Endothelial cell of umbilical vein (primary cell): ENCODE measurements at regions of chr3 and their contacts with region 1.

Region 1: DNA sequence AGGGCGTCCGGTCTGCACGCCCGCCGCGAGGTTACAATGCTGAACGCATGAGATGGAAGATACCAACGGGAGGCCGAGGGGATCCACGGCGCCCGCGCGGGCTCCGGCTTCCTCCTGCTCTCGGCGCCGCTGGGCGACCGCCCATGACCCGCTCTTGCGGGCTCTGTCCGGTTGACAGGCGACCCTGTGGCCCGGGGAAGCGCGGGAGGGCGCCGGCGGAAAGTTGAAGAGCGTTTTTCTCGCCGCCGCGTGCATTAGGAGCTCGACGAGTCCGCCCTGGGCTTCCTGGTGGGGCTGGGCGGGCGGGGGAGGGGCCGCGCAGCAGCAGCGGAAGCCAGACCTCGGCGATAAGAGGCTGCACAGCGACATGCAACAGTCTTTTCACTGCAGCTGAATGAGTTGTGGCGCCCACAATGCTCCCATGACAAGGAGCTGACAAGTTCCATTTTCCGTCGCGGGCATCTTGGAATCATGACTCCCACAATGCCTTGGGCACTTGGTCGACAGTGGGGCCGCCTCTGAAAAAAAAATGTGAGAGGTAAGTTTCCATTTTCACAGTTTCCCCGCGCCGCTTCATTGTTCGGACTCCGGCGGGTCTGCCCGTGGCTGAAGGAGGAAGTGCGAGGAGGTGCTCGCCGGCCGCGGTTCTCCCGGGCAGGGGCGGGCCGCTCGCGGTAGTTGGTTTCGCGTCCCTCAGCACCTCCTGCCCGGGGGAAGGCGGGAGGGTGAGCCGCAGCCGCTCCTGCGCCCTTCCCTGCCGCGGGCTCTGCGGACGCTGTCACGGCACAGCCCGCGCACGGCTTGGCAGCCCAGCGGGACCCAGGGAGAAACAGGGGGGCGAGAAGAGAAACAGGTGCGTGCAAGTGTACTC is at the start of gene MBNL1:
- DNase-seq: peak; percentile 91
- H3K4me3 ChIP-seq: peak within 1 kb of the TSS; percentile 71 to 97 (median 82)
- H3K27ac ChIP-seq: peak within 1 kb of the TSS; percentile 86
- H3K4me1 ChIP-seq: peaks cover 42% of the 10 kb centered on the region
- H3K27me3 ChIP-seq: no peaks in the 10 kb centered on the region
- CTCF ChIP-seq: no peak
- POLR2A ChIP-seq: peak; percentile 94
- total RNA-seq, gene MBNL1: 362 and 385 TPM in 2 replicates

Region 2: GRCh38 chr3:151925876-151926275 is 342.9 kb before region 1 on chr3:
- CTCF ChIA-PET with region 1: no interaction called
- POLR2A ChIA-PET with region 1: no interaction called
- dilution Hi-C with region 1: no loop called
- intact Hi-C with region 1: loop called (anchors 5 kb)
- DNase-seq: peak; percentile 67
- H3K4me3 ChIP-seq: no peak overlapping the region
- H3K27ac ChIP-seq: peak overlapping the region; percentile 29
- H3K4me1 ChIP-seq: peaks cover 32% of the 10 kb centered on the region
- H3K27me3 ChIP-seq: no peaks in the 10 kb centered on the region
- CTCF ChIP-seq: no peak
- POLR2A ChIP-seq: no peak

Region 3: GRCh38 chr3:152026033-152026556 is 242.7 kb before region 1 on chr3:
- CTCF ChIA-PET with region 1: interaction called, 9 read pairs
- POLR2A ChIA-PET with region 1: interaction called, 3 read pairs
- dilution Hi-C with region 1: no loop called
- intact Hi-C with region 1: loop called (anchors 1 kb)
- DNase-seq: peak; percentile 95
- H3K4me3 ChIP-seq: peak overlapping the region in 1 of 3 experiments; percentile 41
- H3K27ac ChIP-seq: peak overlapping the region; percentile 89
- H3K4me1 ChIP-seq: peaks cover 41% of the 10 kb centered on the region
- H3K27me3 ChIP-seq: no peaks in the 10 kb centered on the region
- CTCF ChIP-seq: peak; percentile 16 to 19
- POLR2A ChIP-seq: peak; percentile 45

Region 4: DNA sequence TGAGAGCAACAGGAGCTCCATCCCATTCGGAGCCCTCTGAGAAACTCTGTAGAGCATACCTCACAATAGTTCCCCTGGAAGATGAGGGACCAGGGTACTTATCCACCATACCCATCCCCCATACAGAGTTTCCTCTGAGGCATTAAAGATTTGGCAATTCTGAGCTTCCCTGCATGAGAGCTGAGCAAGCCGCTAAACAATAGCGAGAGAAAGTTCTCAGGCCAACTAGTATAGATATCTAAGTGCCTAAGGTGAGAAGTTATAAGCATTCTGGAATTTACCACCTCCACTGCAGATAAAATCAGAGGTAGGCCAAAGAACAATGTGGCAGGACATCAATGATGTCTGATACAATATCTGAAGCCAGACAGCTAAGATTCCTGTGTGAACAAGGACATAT is 129.1 kb before region 1 on chr3:
- CTCF ChIA-PET with region 1: no interaction called
- POLR2A ChIA-PET with region 1: no interaction called
- dilution Hi-C with region 1: no loop called
- intact Hi-C with region 1: loop called (anchors 5 kb)
- DNase-seq: no peak
- H3K4me3 ChIP-seq: no peak overlapping the region
- H3K27ac ChIP-seq: no peak overlapping the region
- H3K4me1 ChIP-seq: peaks cover 5% of the 10 kb centered on the region
- H3K27me3 ChIP-seq: no peaks in the 10 kb centered on the region
- CTCF ChIP-seq: no peak
- POLR2A ChIP-seq: no peak

Region 5: DNA sequence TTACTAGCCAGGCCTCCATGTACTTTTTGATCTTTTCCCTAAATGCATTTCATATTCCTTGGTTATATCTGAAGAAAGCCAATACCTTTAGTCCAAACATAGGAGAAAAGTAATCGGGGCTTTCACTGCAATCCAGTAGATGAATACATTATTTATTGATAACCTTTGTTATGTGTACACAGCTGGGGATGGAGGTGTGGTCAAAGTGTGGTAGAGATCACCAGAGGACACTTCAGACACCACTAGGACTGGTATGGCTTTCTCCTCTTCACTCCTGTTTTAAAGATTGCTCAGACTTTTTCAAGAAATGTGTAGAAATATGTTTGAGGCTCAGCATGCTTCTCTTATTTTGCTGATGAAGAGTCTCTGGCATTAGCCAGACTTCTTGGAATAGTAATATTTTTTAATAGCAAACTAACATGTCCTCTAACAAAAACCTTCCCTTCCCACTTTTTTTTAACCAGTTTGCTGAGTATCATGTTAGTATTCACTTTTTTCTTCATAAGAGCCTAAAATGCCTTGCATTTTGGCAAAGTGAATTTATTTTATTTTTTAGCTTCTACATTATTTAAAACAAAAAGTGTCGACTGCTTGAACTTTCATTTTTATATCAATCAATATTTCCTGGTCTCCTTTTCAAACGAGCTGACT is 65.7 kb before region 1 on chr3:
- CTCF ChIA-PET with region 1: no interaction called
- POLR2A ChIA-PET with region 1: no interaction called
- dilution Hi-C with region 1: no loop called
- intact Hi-C with region 1: loop called (anchors 5 kb)
- DNase-seq: no peak
- H3K4me3 ChIP-seq: no peak overlapping the region
- H3K27ac ChIP-seq: no peak overlapping the region
- H3K4me1 ChIP-seq: peaks cover 17% of the 10 kb centered on the region
- H3K27me3 ChIP-seq: no peaks in the 10 kb centered on the region
- CTCF ChIP-seq: no peak
- POLR2A ChIP-seq: no peak

Region 6: GRCh38 chr3:152298393-152299242 is 29.8 kb after region 1 on chr3:
- CTCF ChIA-PET with region 1: interaction called, 5 read pairs
- POLR2A ChIA-PET with region 1: no interaction called
- dilution Hi-C with region 1: no loop called
- intact Hi-C with region 1: loop called (anchors 2 kb)
- DNase-seq: peak; percentile 88
- H3K4me3 ChIP-seq: no peak overlapping the region
- H3K27ac ChIP-seq: peak overlapping the region; percentile 9
- H3K4me1 ChIP-seq: peaks cover 48% of the 10 kb centered on the region
- H3K27me3 ChIP-seq: no peaks in the 10 kb centered on the region
- CTCF ChIP-seq: no peak
- POLR2A ChIP-seq: no peak

Region 7: DNA sequence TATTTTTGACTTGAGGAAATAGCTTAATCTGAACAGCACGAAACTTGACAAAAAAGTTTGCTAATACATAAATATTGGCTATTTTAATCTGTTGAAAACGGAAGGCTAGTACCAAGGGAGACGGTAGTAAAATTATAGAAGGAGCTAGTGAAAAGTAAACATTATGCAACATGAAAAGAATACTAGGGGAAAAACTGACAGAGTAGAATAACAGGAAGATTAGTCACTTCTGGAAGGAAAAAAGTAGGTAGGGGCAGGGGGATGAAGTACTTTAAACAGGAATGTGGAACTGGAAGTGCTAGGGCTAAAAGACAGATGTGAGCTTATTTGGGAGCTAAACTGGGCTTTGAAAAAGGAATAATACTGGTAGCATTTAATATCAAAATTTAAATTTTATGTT is 60.1 kb after region 1 on chr3:
- CTCF ChIA-PET with region 1: interaction called, 10 read pairs
- POLR2A ChIA-PET with region 1: interaction called, 5 read pairs
- dilution Hi-C with region 1: no loop called
- intact Hi-C with region 1: loop called (anchors 1 kb)
- DNase-seq: peak; percentile 95
- H3K4me3 ChIP-seq: peak overlapping the region in 1 of 3 experiments; percentile 43
- H3K27ac ChIP-seq: peak overlapping the region; percentile 93
- H3K4me1 ChIP-seq: peaks cover 83% of the 10 kb centered on the region
- H3K27me3 ChIP-seq: no peaks in the 10 kb centered on the region
- CTCF ChIP-seq: no peak
- POLR2A ChIP-seq: peak; percentile 49

Region 8: DNA sequence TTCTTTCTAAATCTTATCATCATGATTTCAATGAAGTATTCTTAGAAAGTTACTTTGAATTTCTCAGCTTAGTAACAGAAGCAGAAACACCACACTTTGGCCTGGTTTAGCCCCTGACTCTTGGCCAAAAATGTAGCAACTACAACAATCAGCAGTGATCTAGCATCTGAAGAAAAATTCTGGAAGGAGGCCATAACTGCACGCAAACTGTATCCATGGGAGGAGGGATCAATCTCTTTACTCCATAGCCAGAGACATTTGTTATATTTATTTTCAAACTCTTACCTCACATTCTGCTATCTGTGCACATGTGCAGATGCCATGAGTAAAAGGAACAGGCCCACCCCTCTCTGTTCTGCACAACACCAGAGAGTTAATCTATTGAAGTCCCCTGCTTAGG is 315.2 kb after region 1 on chr3:
- CTCF ChIA-PET with region 1: no interaction called
- POLR2A ChIA-PET with region 1: no interaction called
- dilution Hi-C with region 1: no loop called
- intact Hi-C with region 1: no loop called
- DNase-seq: no peak
- H3K4me3 ChIP-seq: no peak overlapping the region
- H3K27ac ChIP-seq: no peak overlapping the region
- H3K4me1 ChIP-seq: peaks cover 5% of the 10 kb centered on the region
- H3K27me3 ChIP-seq: no peaks in the 10 kb centered on the region
- CTCF ChIP-seq: no peak
- POLR2A ChIP-seq: no peak